ENCODE measurements at regions of chrX and their contacts with region 1.

Region 1: GRCh38 chrX:109281483-109282275 is 200.2 kb downstream of the GUCY2F start:
- DNase-seq: peak; percentile 55
- H3K4me3 Mint-ChIP-seq: no peak overlapping the region
- H3K27ac Mint-ChIP-seq: no peak overlapping the region
- H3K4me1 Mint-ChIP-seq: peaks cover 14% of the 10 kb centered on the region
- H3K27me3 Mint-ChIP-seq: no peaks in the 10 kb centered on the region
- CTCF ChIP-seq: no peak

Region 2: DNA sequence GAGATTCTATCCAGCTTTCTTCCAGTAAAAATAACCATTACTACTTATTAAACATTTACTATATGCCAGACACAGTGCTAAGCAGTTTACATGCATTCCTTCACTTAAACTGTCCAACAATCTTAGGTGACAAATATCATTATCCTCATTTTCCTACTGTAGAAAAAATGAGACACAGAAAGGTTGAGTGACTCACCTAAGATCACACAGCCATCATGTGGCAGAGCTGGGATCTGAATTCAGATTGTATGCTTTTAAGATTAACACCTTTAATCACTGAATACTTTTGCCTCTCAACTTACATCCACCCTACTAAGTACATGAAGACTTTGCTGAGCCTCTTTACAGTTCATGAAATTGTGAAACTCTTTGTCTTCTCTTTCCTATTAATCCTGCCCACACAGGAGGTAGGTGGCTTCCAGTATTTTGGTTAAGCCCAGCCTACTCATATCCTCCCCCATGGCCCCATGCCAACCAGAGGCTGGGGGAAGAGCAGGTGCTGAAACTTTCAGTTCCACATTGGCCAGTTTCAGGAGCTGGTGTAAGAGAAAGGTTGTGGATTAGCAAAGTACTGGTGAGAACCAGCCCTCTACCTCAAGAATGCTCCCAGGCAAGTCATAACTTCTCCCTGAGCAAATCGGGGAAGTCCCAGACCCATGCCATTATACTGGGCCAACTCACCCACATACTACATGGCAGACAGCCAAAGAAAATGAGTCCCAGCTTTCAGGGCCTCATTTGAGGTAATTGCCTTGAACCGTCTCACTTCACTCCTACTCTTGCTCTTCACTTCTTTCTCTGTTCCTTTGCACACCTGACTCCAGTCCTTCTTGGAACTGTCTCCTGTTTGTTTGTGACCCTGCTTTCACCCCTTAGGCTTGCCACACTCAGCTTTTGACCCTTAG is 10.8 kb before region 1 on chrX:
- CTCF ChIA-PET with region 1: interaction called, 8 read pairs
- intact Hi-C with region 1: loop called (anchors 1 kb)
- DNase-seq: peak; percentile 83
- H3K4me3 Mint-ChIP-seq: no peak overlapping the region
- H3K27ac Mint-ChIP-seq: peak overlapping the region; percentile 80
- H3K4me1 Mint-ChIP-seq: peaks cover 47% of the 10 kb centered on the region
- H3K27me3 Mint-ChIP-seq: no peaks in the 10 kb centered on the region
- CTCF ChIP-seq: no peak

Region 3: DNA sequence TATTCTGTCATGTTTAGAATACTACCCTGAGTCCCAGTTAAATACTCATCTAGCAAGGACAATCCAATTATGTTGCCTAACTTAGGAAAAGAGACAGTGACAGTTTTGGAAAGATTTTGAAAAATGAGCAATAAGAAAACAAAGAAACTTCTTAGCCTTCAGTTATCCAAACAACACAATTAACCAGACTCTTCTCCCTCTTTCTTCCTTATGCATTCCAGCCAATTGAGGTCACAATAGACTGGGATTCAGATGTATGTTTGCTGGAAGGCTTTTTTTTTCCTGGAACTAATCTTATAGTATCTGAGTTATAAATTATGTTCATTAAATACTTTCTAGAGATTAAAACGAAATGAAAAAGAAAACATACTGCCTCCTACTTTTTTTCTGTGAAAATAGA is 90.6 kb after region 1 on chrX:
- CTCF ChIA-PET with region 1: no interaction called
- intact Hi-C with region 1: no loop called
- DNase-seq: no peak
- H3K4me3 Mint-ChIP-seq: no peak overlapping the region
- H3K27ac Mint-ChIP-seq: no peak overlapping the region
- H3K4me1 Mint-ChIP-seq: no peaks in the 10 kb centered on the region
- H3K27me3 Mint-ChIP-seq: no peaks in the 10 kb centered on the region
- CTCF ChIP-seq: no peak

Region 4: GRCh38 chrX:109464231-109464630 is 182.6 kb after region 1 on chrX:
- CTCF ChIA-PET with region 1: no interaction called
- intact Hi-C with region 1: no loop called
- DNase-seq: no peak
- H3K4me3 Mint-ChIP-seq: no peak overlapping the region
- H3K27ac Mint-ChIP-seq: no peak overlapping the region
- H3K4me1 Mint-ChIP-seq: no peaks in the 10 kb centered on the region
- H3K27me3 Mint-ChIP-seq: peaks cover 16% of the 10 kb centered on the region
- CTCF ChIP-seq: no peak

Region 5: GRCh38 chrX:109684136-109684535 is 402.5 kb after region 1 on chrX:
- CTCF ChIA-PET with region 1: no interaction called
- intact Hi-C with region 1: no loop called
- DNase-seq: no peak
- H3K4me3 Mint-ChIP-seq: no peak overlapping the region
- H3K27ac Mint-ChIP-seq: no peak overlapping the region
- H3K4me1 Mint-ChIP-seq: peaks cover 6% of the 10 kb centered on the region
- H3K27me3 Mint-ChIP-seq: no peaks in the 10 kb centered on the region
- CTCF ChIP-seq: no peak

Region 6: DNA sequence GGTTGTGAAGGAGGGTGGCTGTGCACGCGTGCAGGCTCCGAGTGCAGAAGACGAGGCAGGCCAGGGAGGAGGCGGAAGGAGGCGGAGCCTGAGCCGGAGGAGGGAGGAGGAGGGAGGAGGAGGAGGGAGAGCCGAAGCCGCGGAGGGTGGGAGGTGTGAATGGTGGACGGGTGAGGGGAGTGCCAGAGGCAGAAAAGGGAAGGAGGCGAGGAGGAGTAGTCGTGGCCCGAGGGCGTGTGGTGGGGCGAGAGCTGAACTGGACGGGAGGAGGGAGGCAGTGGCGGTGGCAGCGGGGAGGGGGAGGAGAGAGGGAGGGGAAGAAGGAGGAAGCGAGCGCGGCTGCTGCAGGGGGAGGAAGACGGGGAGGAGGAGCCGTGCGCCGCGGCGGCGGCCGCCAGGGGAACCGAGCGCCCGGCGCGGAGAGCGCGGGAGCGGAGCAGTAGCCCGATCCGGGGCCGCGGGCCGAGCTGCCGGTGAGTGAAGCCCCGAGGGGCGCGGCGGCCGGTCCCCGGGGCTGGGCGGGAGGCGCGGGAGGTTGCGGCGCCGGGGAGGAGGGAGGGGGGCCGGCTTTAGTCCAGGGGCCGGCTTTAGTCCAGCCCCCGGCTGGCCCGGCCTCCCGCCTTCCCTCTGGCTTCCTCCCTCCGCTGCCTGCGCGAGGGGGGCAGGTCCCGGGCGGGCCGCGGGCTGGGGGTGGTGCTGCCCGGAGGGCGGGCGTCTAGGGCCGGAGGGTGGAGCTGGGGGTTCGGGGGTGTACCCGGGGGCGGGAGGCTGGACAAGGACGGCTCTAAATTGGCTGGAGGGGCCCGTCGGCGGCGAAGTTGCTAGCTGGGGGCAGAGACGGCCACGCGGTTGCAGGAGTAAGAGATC is 720.9 kb after region 1 on chrX and contains the start of gene TMEM164:
- CTCF ChIA-PET with region 1: no interaction called
- intact Hi-C with region 1: no loop called
- DNase-seq: peak; percentile 85
- H3K4me3 Mint-ChIP-seq: peak within 1 kb of the TSS; percentile 91
- H3K27ac Mint-ChIP-seq: peak within 1 kb of the TSS; percentile 89
- H3K4me1 Mint-ChIP-seq: peaks cover 39% of the 10 kb centered on the region
- H3K27me3 Mint-ChIP-seq: peaks cover 10% of the 10 kb centered on the region
- CTCF ChIP-seq: no peak
- total RNA-seq, gene TMEM164: 32.6 and 39.5 TPM in 2 replicates

Measured in Calu3 (cell line).